H1 (cell line): ENCODE measurements at regions of chr6 and their contacts with region 1.

Region 1: GRCh38 chr6:39075010-39075686 is 26.6 kb downstream of the GLP1R start:
- DNase-seq: no peak
- H3K4me3 ChIP-seq: no peak overlapping the region
- H3K27ac ChIP-seq: no peak overlapping the region
- H3K4me1 ChIP-seq: peaks cover 0 to 10% (median 0%) of the 10 kb centered on the region in 4 experiments; a peak in 3 of 7 replicates
- H3K27me3 ChIP-seq: 0 out of 7 replicates have a peak, but pooled peaks cover 0 to 5% (median 0%) of the 10 kb centered on the region in 4 experiments
- CTCF ChIP-seq: no peak
- EP300 ChIP-seq: no peak
- POLR2A ChIP-seq: no peak
- RAD21 ChIP-seq: no peak

Region 2: DNA sequence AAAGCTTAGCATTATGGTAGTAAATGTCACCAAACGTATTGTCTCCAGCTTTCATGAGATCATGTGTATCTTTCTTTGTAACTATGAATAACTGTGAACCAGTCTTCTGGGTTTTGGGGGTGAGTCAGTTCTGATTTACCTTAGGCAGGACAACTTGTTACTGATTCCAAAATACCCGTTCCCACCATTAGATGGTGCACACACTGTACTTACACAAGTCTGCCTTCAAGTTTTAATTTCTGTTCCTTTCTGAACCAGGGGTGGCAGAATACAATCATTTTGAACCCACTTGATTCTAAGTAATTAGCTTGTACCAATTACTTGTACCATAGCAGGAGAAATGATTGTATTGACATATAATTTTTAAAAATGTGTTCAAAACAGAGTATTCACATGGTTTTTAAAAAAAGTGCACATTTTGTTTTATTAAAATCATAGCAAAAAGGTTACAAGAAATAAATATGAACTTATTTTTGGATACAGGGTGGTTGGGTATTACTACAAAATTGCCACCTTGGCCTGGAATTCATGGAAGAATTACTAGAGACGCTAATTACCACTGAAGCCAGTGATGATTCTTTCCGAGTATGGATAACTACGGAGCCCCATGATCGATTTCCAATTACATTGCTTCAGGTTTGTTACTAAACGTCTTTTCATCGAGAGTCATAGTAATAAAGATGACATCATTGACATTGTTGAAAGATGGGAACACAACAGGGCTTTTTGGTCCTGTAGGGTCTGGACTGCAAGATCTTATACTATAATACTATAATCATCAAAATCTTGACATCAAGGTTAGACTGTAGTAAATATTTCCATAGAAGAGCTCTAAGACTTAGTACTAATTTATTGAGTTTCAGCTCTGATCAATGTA is 101.7 kb before region 1 on chr6:
- CTCF ChIA-PET with region 1: no interaction called
- POLR2A ChIA-PET with region 1: no interaction called
- DNase-seq: no peak
- H3K4me3 ChIP-seq: no peak overlapping the region
- H3K27ac ChIP-seq: no peak overlapping the region
- H3K4me1 ChIP-seq: peaks cover 0 to 3% (median 2%) of the 10 kb centered on the region in 4 experiments; a peak in 4 of 7 replicates
- H3K27me3 ChIP-seq: no peaks in the 10 kb centered on the region
- CTCF ChIP-seq: peak in 2 of 3 experiments; percentile 68 to 92; a peak in 3 of 4 replicates
- EP300 ChIP-seq: no peak
- POLR2A ChIP-seq: no peak
- RAD21 ChIP-seq: peak; percentile 71 to 77

Region 3: DNA sequence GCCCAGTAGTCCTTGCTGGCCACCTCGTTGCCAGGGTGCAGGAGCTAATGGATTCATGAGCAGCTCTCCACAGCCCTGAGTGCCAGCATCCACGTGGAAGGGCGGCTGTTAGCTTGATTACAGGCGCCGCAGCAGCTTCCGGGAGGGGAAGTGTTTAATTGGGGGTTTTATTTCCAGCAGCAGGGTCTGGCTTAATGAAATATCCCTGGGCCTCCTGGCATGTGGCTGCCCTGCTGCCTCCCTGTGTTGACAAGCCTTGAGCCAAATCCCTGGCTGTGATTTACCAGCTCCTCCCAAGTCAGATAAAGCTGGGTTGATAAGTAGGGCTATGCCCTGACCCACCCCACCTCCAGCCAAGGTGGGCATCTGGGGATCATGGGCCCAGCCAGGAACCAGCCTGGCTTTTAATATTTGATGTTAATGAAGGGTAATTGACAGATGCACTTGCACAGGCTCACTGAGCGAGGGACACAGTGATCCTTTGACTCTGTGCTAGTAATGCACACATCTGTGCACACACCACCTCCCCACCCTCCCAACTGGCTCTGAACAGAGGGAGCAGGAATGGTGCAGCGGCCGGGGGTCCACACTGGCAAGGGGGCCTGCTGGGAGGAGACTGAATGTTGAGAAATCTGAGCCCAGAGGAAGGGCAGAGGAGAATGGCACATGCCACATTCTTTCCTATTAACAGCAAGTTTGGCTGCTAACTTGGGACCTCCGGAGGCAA is 13.0 kb before region 1 on chr6:
- CTCF ChIA-PET with region 1: interaction called, 10 read pairs
- POLR2A ChIA-PET with region 1: interaction called, 4 read pairs
- DNase-seq: no peak
- H3K4me3 ChIP-seq: no peak overlapping the region
- H3K27ac ChIP-seq: no peak overlapping the region
- H3K4me1 ChIP-seq: no peaks in the 10 kb centered on the region
- H3K27me3 ChIP-seq: 0 out of 7 replicates have a peak, but pooled peaks cover 0 to under 1% (median 0%) of the 10 kb centered on the region in 4 experiments
- CTCF ChIP-seq: no peak
- EP300 ChIP-seq: no peak
- POLR2A ChIP-seq: no peak
- RAD21 ChIP-seq: no peak